AG04449 (cell line): ENCODE measurements at regions of chr1 and their contacts with region 1.

Region 1: DNA sequence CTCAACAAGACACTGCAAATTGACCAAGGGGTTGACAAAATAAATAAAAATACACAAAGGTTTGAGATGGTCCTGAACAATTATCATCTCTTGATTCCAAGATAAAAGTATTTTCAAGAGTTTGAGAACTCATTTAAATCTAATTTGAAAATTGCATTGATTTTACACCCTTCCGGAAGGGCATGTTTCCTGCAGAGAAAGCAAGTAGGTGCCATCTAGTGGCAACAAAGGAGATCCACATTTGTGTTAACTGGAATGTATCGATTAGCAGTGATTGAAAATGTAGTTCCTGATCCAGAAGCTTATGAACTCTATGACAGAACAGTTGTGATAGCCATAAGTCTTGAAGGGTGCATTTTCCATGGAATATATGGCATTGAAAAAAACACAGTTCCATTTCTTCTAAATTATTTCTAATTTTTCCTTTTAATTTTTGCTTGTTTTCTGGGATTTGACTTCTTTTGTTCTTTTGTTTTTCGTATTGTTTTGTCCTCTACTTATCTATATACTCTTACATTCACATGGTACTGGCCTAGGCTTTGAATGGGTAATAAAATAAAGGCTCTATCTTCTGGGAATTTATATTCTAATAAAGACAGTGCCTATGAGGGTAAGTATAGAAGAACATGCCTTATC is 143.7 kb downstream of the DNM3 start:
- DNase-seq: no peak
- H3K4me3 ChIP-seq: no peak overlapping the region
- CTCF ChIP-seq: peak; percentile 61

Region 2: DNA sequence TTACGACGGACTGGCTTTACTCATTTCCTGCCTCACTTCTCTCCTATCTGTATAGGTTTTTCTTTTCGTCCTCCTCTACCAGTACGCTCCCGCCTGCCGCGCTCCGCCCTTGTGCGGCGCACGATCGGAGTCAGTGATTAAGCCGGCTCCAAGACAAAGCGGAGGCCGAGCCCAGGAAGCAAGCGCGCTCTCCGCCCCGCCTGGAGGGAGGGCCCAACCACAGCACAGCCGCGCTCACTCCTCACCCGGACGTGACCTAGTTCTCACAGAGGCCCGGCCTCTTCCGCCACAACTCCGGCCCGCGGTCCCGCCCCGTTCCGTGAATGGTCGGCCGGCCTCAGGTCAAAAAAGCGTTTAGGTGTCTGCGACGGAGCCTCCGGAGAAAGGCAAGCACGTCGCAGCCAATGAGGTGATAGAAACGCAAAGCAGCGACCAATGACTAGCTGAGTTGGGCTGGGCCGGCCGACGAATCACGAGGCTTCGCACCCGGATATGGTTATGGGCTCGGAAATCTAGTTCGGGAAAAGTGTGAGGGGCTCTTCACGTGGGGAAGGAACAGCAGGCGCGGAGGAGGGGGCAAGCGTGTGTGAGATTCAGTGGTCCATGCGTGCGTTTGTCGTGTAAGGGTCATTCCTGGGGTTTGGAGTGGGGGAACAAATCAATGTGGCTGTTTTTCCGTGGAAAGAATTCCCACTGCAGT is 203.6 kb before region 1 on chr1 and contains the start of gene METTL13:
- CTCF ChIA-PET with region 1: interaction called, 28 read pairs
- POLR2A ChIA-PET with region 1: no interaction called
- DNase-seq: peak; percentile 94
- H3K4me3 ChIP-seq: peak within 1 kb of the TSS; percentile 89
- CTCF ChIP-seq: no peak

Region 3: GRCh38 chr1:171794085-171794484 is 190.9 kb before region 1 on chr1:
- CTCF ChIA-PET with region 1: interaction called, 835 read pairs
- POLR2A ChIA-PET with region 1: no interaction called
- DNase-seq: no peak
- H3K4me3 ChIP-seq: no peak overlapping the region
- CTCF ChIP-seq: no peak

Region 4: GRCh38 chr1:171817511-171818265 is 167.3 kb before region 1 on chr1:
- CTCF ChIA-PET with region 1: interaction called, 835 read pairs
- POLR2A ChIA-PET with region 1: no interaction called
- DNase-seq: no peak
- H3K4me3 ChIP-seq: no peak overlapping the region
- CTCF ChIP-seq: no peak

Region 5: DNA sequence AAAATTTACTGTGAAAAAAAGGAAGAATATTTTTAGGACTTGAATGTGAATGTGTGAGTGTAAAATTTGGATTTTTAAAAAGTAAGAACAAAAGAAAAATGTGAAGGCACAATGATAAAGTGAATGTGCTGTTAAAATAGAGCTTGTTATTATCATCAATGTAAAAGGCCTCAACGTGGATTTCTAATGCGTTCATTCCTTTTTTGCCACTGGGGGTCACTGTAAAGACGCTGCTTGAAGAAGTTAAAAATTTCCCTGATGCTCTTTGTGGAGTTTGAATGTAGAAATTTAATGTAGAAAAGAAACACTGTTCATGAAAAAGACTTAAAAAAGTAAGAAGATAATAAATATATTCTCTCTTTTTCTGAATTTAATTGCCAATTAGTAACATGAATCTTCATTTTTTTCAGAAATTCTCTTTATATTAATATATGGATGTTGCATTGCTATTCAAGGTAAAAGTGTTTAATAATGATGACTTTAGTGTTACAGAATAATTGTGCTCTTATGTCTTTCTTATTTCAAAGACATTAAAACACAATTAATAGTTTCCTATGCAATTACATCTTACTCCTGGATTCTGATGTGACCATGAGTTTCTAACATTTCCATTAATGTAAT is 17.9 kb after region 1 on chr1:
- CTCF ChIA-PET with region 1: interaction called, 112 read pairs
- POLR2A ChIA-PET with region 1: no interaction called
- DNase-seq: no peak
- H3K4me3 ChIP-seq: no peak overlapping the region
- CTCF ChIP-seq: peak; percentile 56